GM12878 (cell line): ENCODE measurements at regions of chr3 and their contacts with region 1.

Region 1: DNA sequence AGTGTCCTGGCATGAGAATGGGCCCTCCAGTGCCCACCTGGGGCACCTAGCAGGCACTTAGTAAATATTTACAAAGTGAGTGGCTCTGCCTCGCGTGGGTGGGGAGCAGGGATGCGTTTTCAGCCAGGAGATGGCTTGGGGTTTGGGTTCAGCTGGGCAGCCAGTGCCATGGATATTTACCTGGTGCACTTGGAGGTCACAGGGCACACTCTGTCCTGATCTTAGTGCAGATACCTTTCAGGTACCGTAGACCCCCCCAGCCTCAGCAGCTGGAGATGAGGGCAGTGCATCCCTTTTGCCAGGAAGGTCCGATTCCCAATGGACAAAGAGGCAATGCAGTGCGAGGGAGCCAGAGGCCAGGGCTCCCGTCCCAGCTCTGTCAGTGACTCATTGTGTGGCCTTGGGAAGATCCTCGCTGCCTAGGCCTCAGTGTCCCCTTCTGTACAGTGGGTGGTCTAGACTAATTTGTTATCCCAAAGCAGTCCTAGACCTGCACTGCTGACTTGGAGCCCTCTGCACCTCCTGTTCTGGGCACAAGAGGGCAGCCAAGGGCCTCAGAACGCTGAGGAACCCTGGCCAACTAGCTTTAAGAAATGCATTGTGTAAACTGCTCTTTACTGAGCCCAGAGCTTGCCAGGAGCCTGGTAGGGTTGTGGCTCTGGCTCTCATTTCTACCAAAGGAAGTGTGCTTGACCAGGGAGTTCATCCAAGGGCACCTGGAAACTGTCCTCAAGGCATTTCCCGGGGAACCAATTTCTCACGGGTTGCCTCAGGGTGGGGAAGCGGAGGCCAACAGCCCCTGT is 16.0 kb downstream of the HDAC11 start:
- DNase-seq: peak; percentile 17
- ATAC-seq: peak; percentile 90
- H3K4me3 ChIP-seq: no peak overlapping the region
- H3K27ac ChIP-seq: no peak overlapping the region
- H3K4me1 ChIP-seq: peaks cover 11% of the 10 kb centered on the region
- H3K27me3 ChIP-seq: no peaks in the 10 kb centered on the region; a peak in 1 of 4 replicates
- CTCF ChIP-seq: peak; percentile 96 to 98 (median 97); a peak in 5 of 6 replicates
- EP300 ChIP-seq: no peak
- POLR2A ChIP-seq: no peak
- RAD21 ChIP-seq: peak; percentile 94

Region 2: GRCh38 chr3:13282986-13283876 is 212.9 kb before region 1 on chr3:
- CTCF ChIA-PET with region 1: no interaction called
- POLR2A ChIA-PET with region 1: no interaction called
- RAD21 ChIA-PET with region 1: no interaction called
- SMC1A ChIA-PET with region 1: no interaction called
- in situ Hi-C with region 1: no loop called
- intact Hi-C with region 1: no loop called
- DNase-seq: no peak
- ATAC-seq: no peak
- H3K4me3 ChIP-seq: peak overlapping the region; percentile 16; the same call in 1 of the 2 replicates
- H3K27ac ChIP-seq: no peak overlapping the region
- H3K4me1 ChIP-seq: no peaks in the 10 kb centered on the region
- H3K27me3 ChIP-seq: peaks cover 11 to 31% of the 10 kb centered on the region in 2 experiments
- CTCF ChIP-seq: no peak
- EP300 ChIP-seq: no peak
- POLR2A ChIP-seq: no peak
- RAD21 ChIP-seq: no peak

Region 3: DNA sequence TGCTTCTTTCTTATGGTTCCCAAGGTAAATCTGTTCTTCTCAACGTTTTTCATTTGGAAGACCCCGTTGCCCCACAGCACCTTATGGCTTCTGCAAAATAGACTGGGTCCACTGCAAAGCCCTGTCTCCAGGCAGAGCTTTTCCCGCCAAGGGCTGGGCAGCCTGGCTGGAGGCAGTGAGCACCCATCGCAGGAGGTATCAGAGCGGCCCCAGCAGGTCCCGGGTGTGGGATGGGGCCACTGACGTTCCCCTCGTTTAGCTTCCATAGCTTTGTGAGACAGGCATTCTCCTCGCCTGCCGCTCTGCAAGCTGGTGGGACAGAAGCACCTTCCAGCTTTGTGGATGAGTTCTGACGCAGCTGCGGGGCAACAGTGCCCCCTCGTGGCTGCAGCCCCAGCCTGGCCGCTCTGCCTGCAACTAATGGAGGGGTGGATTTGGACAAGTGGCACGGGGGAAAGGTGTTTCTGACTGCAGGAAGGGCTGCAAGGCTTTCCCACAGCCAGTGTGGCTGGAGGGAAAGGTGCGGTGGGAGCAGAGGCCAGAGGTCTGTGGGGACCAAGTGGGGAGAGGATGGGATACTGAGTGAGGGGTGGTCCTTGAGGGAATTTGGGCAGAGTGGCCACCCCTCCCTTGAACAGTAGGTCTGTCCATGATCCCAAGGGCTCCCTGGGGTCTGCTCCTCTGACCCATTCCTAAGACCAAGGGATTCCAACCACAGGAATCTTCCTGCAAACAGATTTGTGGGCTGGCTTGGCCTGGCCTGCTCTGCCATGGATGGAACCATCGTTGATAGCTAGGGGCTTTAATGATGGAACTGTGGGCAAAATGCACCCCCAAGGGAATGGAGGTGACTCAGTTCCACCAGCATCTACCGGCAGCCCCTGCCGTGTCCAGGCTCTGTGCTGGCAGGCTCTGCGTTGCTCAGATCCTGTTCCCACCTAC is 152.2 kb after region 1 on chr3:
- CTCF ChIA-PET with region 1: interaction called, 231 read pairs
- POLR2A ChIA-PET with region 1: interaction called, 4 read pairs
- RAD21 ChIA-PET with region 1: interaction called, 79 read pairs
- SMC1A ChIA-PET with region 1: interaction called, 62 read pairs
- in situ Hi-C with region 1: loop called (anchors 5 kb)
- intact Hi-C with region 1: loop called (anchors 1 kb)
- DNase-seq: no peak
- ATAC-seq: peak; percentile 88
- H3K4me3 ChIP-seq: no peak overlapping the region
- H3K27ac ChIP-seq: no peak overlapping the region
- H3K4me1 ChIP-seq: no peaks in the 10 kb centered on the region
- H3K27me3 ChIP-seq: peaks cover 2 to 6% of the 10 kb centered on the region in 2 experiments; a peak in 2 of 4 replicates
- CTCF ChIP-seq: peak; percentile 97 to 99 (median 98)
- EP300 ChIP-seq: no peak
- POLR2A ChIP-seq: no peak
- RAD21 ChIP-seq: peak; percentile 92

Region 4: GRCh38 chr3:13657660-13658435 is 161.7 kb after region 1 on chr3:
- CTCF ChIA-PET with region 1: interaction called, 14 read pairs
- POLR2A ChIA-PET with region 1: interaction called, 4 read pairs
- RAD21 ChIA-PET with region 1: interaction called, 4 read pairs
- SMC1A ChIA-PET with region 1: interaction called, 4 read pairs
- in situ Hi-C with region 1: no loop called
- intact Hi-C with region 1: no loop called
- DNase-seq: no peak
- ATAC-seq: peak; percentile 96
- H3K4me3 ChIP-seq: no peak overlapping the region
- H3K27ac ChIP-seq: no peak overlapping the region
- H3K4me1 ChIP-seq: no peaks in the 10 kb centered on the region
- H3K27me3 ChIP-seq: peaks cover 2 to 4% of the 10 kb centered on the region in 2 experiments; a peak in 2 of 4 replicates
- CTCF ChIP-seq: peak; percentile 80 to 94 (median 83)
- EP300 ChIP-seq: no peak
- POLR2A ChIP-seq: no peak
- RAD21 ChIP-seq: peak; percentile 78

Region 5: GRCh38 chr3:13884851-13885703 is 389.0 kb after region 1 on chr3:
- CTCF ChIA-PET with region 1: interaction called, 4 read pairs
- POLR2A ChIA-PET with region 1: no interaction called
- RAD21 ChIA-PET with region 1: no interaction called
- SMC1A ChIA-PET with region 1: no interaction called
- in situ Hi-C with region 1: no loop called
- intact Hi-C with region 1: loop called (anchors 10 kb)
- DNase-seq: no peak
- ATAC-seq: peak; percentile 93
- H3K4me3 ChIP-seq: no peak overlapping the region
- H3K27ac ChIP-seq: no peak overlapping the region
- H3K4me1 ChIP-seq: no peaks in the 10 kb centered on the region
- H3K27me3 ChIP-seq: peaks cover 1 to 6% of the 10 kb centered on the region in 2 experiments
- CTCF ChIP-seq: peak; percentile 66 to 84 (median 81)
- EP300 ChIP-seq: no peak
- POLR2A ChIP-seq: no peak
- RAD21 ChIP-seq: peak; percentile 66